ENCODE measurements at regions of chr2 and their contacts with region 1.

Region 1: DNA sequence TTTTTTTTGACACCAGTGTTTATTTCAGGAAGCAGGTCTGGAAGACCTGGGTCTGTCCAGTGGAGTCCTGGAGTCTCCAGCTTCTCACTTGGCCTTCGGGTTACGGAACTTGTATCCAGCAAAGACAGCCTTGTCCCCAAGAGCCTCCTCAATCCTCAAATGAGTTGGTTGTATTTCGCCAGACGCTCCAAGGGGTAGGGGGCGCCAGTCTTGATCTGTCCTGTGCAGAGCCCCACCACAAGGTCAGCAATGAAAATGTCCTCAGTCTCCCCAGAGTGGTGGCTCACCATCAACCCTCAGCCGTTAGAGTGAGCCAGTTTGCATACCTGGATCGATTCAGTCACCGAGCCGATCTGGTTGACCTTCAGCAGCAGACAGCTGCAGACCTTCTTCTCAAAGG is 21.9 kb downstream of the ASXL2 start:
- DNase-seq: peak; percentile 40

Region 2: DNA sequence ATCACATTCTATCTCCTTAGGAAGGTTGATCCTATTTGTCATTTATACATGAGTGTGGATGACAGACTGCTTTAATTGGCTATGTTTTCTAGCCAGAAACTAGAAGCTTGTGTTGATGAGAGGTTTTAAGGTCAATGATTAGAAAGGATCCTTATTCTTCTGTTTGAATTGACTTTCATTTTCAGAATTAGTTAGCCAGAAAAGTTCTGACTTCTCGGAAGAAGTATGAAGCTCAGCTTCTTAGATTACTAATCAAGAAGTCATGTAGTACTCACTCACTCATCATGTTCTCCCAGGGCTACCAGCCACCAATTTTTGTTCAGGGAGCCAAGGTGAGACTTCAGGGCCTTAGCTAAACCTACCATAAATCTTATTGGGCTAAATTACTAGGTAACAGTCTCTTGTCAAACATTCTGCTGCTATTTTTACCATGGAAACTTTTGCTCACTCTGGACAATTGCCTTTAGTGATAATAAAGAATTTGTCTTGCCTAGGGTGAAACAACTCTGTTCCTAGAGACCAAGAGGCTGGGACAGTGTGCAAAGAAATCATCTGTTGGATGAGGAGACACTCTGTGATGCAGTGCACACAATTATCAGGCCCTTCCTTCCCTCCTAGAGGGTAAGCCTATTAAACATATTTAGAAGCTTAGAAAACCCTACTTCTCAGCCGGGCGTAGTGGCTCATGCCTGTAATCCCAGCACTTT is 403.0 kb before region 1 on chr2:
- intact Hi-C with region 1: no loop called
- DNase-seq: no peak

Region 3: DNA sequence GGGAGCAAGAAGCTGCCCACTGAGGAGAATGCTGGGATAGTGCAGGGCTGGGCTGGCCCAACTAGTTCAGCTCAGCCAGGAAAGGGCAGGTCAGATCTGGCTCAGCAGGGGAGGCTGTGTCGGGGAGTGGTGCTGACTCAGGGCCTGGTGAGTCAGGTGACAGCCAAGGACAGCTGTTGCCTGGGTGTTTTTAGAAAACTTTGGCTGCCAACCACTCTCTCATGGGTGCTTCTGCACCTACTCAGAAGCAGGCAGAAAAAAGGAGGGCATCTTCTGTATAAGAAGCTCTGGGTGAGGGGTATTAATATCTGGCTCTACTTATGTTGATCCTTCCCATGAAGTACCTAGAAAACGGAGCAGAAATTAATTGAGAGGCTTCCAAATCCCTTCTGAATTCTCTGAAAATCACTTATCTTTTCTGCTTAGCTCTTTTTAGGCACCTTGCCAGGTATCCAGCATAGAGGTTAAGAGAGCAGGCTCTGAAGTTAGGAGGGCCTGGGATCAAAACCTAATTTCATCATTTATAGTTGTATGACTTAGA is 161.9 kb after region 1 on chr2:
- intact Hi-C with region 1: no loop called
- DNase-seq: peak; percentile 90

Region 4: DNA sequence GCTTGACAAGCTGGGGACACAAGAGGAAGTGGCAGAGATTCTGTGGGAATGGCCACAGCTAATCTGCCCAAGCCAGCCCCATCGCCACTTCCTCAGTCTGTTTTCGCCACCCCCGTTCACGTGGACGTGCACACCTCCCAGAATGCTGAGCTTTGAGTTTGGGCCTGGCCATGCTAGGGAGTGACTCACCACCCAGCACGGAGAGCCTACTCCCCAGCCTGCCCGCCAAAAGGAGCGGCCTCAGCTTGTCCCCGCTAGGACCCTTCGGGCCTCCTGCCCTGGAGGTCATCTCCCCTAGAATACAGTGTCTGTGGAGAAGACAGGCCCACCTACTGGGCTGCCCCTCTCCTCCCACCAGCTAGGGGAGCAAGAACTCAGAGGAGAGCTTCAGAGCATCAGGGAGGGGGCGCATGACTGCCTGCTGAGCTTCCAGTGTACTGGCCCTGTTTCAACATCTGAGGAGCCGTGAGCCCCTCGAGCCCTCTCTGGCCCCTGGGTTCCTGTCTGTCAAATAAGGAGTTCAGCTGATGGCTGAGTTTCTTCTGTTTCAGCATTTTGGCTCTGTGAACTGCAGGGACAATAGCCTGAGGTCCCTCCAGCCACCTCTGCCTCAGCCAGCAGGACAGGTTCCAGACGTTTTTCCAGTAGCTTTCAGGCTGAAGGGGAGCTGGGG is 912.8 kb after region 1 on chr2:
- intact Hi-C with region 1: loop called in 1 of 2 experiments (anchors 5 kb)
- DNase-seq: peak; percentile 95